ENCODE measurements at regions of chr1 and their contacts with region 1.

Region 1: GRCh38 chr1:152047730-152048402 is 11.1 kb upstream of the S100A11 start:
- DNase-seq: peak; percentile 94
- H3K4me3 Mint-ChIP-seq: peak overlapping the region; percentile 67
- H3K27ac Mint-ChIP-seq: peak overlapping the region; percentile 98
- H3K4me1 Mint-ChIP-seq: peaks cover 19% of the 10 kb centered on the region
- H3K27me3 Mint-ChIP-seq: peaks cover 2% of the 10 kb centered on the region

Region 2: DNA sequence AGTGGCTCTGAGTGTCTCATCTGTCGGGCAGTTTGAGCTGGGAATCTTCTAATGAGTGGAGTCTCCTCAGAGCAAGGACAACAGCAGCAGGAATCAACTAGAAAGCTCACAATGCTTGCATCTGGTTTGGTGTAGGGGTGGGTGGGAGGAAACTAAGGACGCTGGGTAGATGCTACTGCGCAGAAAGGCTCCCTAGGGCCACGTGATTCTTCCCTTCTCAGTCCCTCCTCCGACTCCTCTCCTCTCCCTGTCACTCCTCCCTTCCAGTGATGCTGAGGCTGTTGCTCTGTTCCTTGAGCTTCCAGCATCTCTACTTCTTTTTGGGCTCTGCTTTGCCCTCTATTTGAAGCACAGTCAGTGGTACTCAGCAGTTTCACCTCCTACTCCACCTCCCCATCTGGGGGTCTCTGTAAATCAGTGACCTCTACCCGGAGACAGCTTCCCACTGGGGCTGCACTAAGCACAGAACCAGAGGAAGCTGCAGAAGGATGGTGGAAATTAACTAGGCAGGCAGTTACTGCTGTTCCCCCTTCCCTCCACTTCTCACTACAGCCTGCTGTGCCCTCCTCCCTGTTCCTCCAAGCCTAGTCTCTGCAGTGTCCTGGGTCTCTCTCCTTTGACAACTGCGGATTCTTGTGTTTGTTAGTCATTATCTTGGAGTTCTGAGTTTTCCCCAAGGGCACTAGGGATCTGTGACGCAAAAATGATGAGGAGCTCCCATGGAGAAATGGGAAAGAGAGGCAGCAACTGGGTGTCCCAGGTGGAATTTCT is 248.5 kb before region 1 on chr1:
- CTCF ChIA-PET with region 1: no interaction called
- intact Hi-C with region 1: no loop called
- DNase-seq: no peak
- H3K4me3 Mint-ChIP-seq: no peak overlapping the region
- H3K27ac Mint-ChIP-seq: no peak overlapping the region
- H3K4me1 Mint-ChIP-seq: peaks cover 2% of the 10 kb centered on the region
- H3K27me3 Mint-ChIP-seq: peaks cover 2% of the 10 kb centered on the region

Region 3: DNA sequence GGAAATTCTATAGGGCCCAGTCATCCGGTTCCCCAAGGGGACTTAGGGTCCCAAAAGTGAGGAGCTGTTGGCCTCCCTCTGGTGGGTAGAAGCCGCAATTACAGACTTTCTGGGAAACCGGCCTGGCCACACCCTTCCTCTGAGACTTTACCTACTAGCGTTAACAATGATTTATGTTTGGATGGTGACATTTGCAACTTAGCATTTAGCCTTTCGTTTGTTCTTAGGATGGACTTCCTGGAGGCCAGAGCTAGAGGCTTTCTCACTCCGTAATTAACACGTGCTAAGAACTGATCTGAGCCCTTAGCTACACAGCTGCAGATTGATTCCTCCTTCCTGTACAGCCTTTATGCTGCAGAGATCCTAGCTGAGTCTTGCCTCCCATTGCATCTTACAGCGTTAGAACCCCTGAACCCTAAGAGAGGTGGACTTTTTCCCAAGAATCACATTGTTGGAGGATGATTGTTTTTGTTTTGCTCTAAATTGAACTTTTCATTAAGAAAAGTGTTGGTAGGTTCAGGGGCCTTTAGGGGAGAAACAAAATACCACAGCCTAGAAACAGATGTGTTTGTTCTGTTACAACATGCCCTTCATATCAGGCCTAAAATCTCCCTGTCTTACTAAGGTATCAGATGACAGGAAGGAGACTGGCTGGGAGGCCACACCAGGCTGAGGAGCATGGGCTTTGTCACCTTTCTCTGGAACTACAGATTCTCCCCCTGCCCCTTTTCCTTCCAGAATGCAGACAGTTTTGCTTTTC is 13.0 kb before region 1 on chr1:
- CTCF ChIA-PET with region 1: interaction called, 17 read pairs
- intact Hi-C with region 1: loop called (anchors 1 kb)
- DNase-seq: peak; percentile 85
- H3K4me3 Mint-ChIP-seq: peak overlapping the region; percentile 96
- H3K27ac Mint-ChIP-seq: peak overlapping the region; percentile 98
- H3K4me1 Mint-ChIP-seq: peaks cover 21% of the 10 kb centered on the region
- H3K27me3 Mint-ChIP-seq: no peaks in the 10 kb centered on the region

Region 4: DNA sequence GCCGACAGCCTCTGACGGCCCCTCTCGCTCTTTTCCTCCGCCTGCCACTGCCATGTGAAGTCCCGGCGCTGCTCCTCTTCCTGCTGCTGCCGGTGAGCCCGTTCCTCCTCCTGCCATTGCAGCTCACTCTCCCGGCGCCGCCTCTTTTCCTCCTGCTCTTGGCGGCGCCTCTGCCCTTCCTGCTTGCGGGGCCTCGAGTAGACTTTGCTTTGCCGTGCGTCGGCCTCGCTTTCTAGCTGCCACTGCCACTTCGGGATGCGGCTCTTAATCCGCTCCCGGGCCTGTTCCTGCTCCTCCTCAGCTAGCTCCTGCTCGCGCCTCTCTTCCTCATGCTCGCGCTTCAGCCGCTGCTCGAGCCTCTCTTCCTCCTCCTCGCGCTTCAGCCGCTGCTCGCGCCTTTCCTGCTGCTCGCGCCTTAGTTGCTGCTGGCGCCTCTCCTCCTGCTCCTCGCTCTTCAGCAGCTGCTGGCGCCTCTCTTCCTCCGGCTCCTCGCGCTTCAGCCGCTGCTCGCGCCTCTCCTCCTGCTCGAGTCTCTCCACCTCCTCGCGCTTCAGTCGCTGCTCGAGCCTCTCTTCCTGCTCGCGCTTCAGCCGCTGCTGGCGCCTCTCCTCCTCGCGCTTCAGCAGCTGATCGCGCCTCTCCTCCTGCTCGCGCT is 63.1 kb after region 1 on chr1:
- CTCF ChIA-PET with region 1: interaction called, 14 read pairs
- intact Hi-C with region 1: loop called (anchors 1 kb)
- DNase-seq: peak; percentile 49
- H3K4me3 Mint-ChIP-seq: no peak overlapping the region
- H3K27ac Mint-ChIP-seq: no peak overlapping the region
- H3K4me1 Mint-ChIP-seq: peaks cover 4% of the 10 kb centered on the region
- H3K27me3 Mint-ChIP-seq: peaks cover 17% of the 10 kb centered on the region

Region 5: GRCh38 chr1:152175544-152175943 is 127.7 kb after region 1 on chr1:
- CTCF ChIA-PET with region 1: interaction called, 266 read pairs
- intact Hi-C with region 1: no loop called
- DNase-seq: no peak
- H3K4me3 Mint-ChIP-seq: no peak overlapping the region
- H3K27ac Mint-ChIP-seq: no peak overlapping the region
- H3K4me1 Mint-ChIP-seq: no peaks in the 10 kb centered on the region
- H3K27me3 Mint-ChIP-seq: no peaks in the 10 kb centered on the region

Region 6: DNA sequence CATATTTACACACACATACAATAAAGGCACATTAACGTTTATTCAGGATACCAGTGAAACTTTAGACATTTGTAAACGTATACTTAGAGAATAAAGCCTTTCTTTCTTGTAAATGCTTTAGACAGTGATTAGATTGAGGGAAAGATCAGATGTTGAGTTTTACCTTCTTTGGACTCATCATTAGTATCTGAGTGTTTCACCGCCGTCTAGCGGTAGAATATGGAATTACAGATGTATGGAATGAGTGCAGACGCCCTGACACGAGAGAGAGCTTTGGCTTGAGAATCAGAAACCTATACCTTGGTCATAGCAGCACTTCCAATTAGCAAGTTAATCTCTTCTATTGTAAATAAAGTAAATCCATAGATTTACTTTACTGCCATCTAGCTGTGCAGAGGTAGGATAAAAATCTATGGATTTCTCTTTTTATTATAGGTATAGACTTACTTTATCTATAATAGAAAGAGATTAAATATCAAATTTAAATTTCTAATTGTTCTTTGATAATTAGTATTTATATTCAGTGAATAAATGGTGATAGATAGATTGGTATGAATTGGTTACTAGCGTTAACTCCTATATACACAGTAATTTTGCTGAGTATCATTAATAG is 299.4 kb after region 1 on chr1:
- CTCF ChIA-PET with region 1: interaction called, 4 read pairs
- intact Hi-C with region 1: loop called (anchors 2 kb)
- DNase-seq: peak; percentile 72
- H3K4me3 Mint-ChIP-seq: no peak overlapping the region
- H3K27ac Mint-ChIP-seq: no peak overlapping the region
- H3K4me1 Mint-ChIP-seq: peaks cover 7% of the 10 kb centered on the region
- H3K27me3 Mint-ChIP-seq: peaks cover 21% of the 10 kb centered on the region